Activated T-helper 1 cell treated with anti-CD3 and anti-CD28 coated beads, Interleukin-12 subunit alpha, Interleukin-12 subunit beta, Interleukin-2, Interleukin-4 antibody, amounts not matched to agents 30 ng/mL and 10 ng/mL and 1 ng/mL, durations not matched to agents 14 hours and 24 hours and 36 hours (primary cell): ENCODE measurements at regions of chr19 and their contacts with region 1.

Region 1: DNA sequence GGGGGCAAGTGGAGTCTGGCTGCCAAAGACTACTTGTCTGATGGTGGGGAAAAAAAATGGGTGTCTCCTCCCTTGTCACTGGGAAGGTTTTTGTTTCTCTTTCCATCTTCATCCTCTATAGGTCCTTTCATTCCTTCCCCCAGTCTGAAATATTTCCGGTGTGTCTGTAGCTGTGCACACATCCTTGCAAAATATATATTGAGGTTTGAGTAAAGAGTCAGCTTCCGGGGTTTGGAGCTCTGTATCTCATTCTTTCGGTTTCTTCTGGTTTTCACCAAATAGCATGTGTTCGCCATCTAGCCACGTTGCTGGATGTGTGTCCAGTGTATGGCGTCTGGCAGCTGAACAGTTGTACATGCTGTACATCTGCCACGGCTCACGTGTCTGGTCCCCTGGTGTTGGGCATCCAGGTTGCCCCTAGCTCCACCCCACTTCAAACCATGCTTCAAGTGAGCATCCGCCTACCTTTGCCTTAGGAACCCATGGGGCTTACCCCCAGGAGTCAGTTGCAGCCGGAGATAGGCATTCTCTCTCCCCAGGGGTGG is 142.2 kb downstream of the SIPA1L3 start:
- DNase-seq: peak; percentile 61
- H3K4me3 Mint-ChIP-seq: peak overlapping the region; percentile 79
- H3K27ac Mint-ChIP-seq: peak overlapping the region; percentile 92
- H3K4me1 Mint-ChIP-seq: peaks cover 36% of the 10 kb centered on the region
- H3K27me3 Mint-ChIP-seq: no peaks in the 10 kb centered on the region

Region 2: GRCh38 chr19:37899966-37900365 is 149.2 kb before region 1 on chr19:
- intact Hi-C with region 1: no loop called
- DNase-seq: no peak
- H3K4me3 Mint-ChIP-seq: no peak overlapping the region
- H3K27ac Mint-ChIP-seq: no peak overlapping the region
- H3K4me1 Mint-ChIP-seq: peaks cover 4% of the 10 kb centered on the region
- H3K27me3 Mint-ChIP-seq: no peaks in the 10 kb centered on the region

Region 3: DNA sequence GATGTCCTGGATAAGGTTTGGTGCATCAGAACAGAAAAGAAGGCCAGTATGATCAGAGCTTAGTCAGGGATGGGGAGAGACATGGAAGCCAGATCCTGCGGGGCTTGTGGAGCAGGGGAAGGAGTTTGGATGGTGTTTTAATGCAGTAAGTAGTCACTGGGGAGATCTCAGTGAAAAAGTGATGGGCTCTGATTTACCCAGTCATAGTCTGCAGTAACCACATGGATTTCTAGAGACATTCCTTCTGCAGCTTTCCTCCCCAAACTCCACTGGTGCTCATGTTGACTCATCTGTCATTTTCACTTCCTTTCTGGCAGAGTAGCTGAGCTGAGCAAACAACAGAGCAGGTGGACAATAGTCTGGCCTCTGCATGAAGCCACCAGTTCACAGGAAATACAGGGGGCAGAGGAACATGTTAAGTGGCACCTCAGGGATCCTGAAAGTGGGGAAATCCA is 30.8 kb after region 1 on chr19:
- intact Hi-C with region 1: loop called (anchors 1 kb)
- DNase-seq: no peak
- H3K4me3 Mint-ChIP-seq: no peak overlapping the region
- H3K27ac Mint-ChIP-seq: peak overlapping the region; percentile 83
- H3K4me1 Mint-ChIP-seq: peaks cover 23% of the 10 kb centered on the region
- H3K27me3 Mint-ChIP-seq: no peaks in the 10 kb centered on the region

Region 4: GRCh38 chr19:38224014-38224862 is 175.1 kb after region 1 on chr19 and contains the start of gene DPF1:
- intact Hi-C with region 1: loop called (anchors 10 kb)
- DNase-seq: peak; percentile 47
- H3K4me3 Mint-ChIP-seq: peak within 1 kb of the TSS; percentile 83
- H3K27ac Mint-ChIP-seq: peak within 1 kb of the TSS; percentile 64
- H3K4me1 Mint-ChIP-seq: peaks cover 29% of the 10 kb centered on the region
- H3K27me3 Mint-ChIP-seq: peaks cover 60% of the 10 kb centered on the region
- total RNA-seq, gene DPF1: 1.4 and 1.7 TPM in 2 replicates

Region 5: GRCh38 chr19:38277969-38278680 is 228.9 kb after region 1 on chr19:
- intact Hi-C with region 1: no loop called
- DNase-seq: no peak
- H3K4me3 Mint-ChIP-seq: no peak overlapping the region
- H3K27ac Mint-ChIP-seq: no peak overlapping the region
- H3K4me1 Mint-ChIP-seq: peaks cover 19% of the 10 kb centered on the region
- H3K27me3 Mint-ChIP-seq: peaks cover 3% of the 10 kb centered on the region